ENCODE measurements at regions of chr6 and their contacts with region 1.

Region 1: DNA sequence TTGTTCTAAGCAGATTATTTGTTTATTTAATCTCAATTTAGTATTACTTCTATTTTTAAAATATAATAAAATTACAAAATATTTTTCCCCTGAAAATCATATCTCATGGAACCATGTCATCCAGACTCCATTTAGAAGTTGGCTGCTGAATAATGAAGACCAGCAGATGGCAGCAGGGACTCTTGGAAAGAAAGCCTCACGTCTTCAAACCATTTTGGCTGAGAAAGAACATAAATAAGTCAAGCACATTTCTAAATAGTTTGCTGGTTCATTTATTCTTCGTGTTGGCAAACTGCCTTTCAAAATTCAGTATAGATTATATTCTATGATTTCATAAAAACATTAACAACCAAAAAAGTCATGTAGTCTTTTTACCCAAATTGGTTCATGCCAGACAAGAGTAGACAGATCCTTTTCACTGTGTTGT is 71.7 kb downstream of the RCAN2 start:
- DNase-seq: peak in 8 of 10 donors; percentile 32 to 89 (median 66)

Region 2: GRCh38 chr6:46484081-46484820 is 64.7 kb after region 1 on chr6:
- intact Hi-C with region 1: no loop called
- DNase-seq: no peak

Region 3: GRCh38 chr6:46781478-46782378 is 362.1 kb after region 1 on chr6:
- intact Hi-C with region 1: loop called (anchors 10 kb)
- DNase-seq: peak in 4 of 10 donors; percentile 35 to 59 (median 54)

Region 4: GRCh38 chr6:46983007-46983411 is 563.4 kb after region 1 on chr6:
- intact Hi-C with region 1: loop called (anchors 10 kb)
- DNase-seq: no peak